OCI-LY7 (cell line): ENCODE measurements at regions of chr12 and their contacts with region 1.

Region 1: GRCh38 chr12:92570056-92570753 is 132.6 kb upstream of the PLEKHG7 start:
- DNase-seq: peak; percentile 85
- H3K4me3 ChIP-seq: peak overlapping the region; percentile 22
- H3K27ac ChIP-seq: peak overlapping the region; percentile 26
- H3K4me1 ChIP-seq: peaks cover 40% of the 10 kb centered on the region
- CTCF ChIP-seq: peak; percentile 100

Region 2: GRCh38 chr12:91382081-91382543 is 1188.1 kb before region 1 on chr12:
- CTCF ChIA-PET with region 1: interaction called, 3 read pairs
- POLR2A ChIA-PET with region 1: interaction called, 3 read pairs
- intact Hi-C with region 1: loop called (anchors 1 kb)
- DNase-seq: peak; percentile 77
- H3K4me3 ChIP-seq: no peak overlapping the region
- H3K27ac ChIP-seq: no peak overlapping the region
- H3K4me1 ChIP-seq: no peaks in the 10 kb centered on the region
- CTCF ChIP-seq: peak; percentile 94

Region 3: DNA sequence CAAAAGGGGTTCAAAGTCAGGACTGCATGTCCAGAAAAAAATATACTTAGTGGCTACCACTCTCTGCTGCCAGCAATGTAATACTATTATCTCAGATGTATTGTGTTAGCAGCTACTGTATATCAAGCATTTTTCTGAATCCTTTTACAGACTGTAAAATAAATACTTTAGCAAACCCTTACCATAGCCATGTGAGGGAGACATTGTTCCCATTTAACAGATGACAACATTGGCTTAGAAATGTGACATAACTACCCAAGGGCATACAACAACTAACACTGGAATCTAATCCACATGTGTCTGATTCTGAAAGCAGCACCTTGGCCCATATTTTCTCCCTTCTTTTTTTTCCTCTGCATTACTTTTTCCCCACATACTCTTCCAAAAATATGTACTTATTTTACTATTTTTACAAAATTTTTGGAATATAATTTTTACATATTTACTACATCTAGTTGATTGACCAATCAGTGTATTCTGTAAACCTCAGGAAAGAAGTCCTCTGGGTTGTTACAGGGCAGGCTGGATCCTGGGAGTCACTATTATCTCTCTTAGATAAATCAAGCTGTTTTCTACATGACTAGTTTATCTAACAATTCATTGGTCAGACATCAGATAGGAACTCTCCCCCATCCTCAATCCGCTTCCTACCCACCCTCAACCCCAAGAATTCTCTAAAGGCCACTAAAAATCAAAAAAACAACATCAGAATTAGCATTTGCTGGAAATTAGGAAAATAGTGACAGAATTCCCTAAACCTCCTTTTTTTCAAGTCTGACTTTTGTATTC is 578.6 kb before region 1 on chr12:
- CTCF ChIA-PET with region 1: interaction called, 3 read pairs
- POLR2A ChIA-PET with region 1: no interaction called
- intact Hi-C with region 1: loop called (anchors 2 kb)
- DNase-seq: peak; percentile 52
- H3K4me3 ChIP-seq: no peak overlapping the region
- H3K27ac ChIP-seq: no peak overlapping the region
- H3K4me1 ChIP-seq: no peaks in the 10 kb centered on the region
- CTCF ChIP-seq: peak; percentile 62

Region 4: DNA sequence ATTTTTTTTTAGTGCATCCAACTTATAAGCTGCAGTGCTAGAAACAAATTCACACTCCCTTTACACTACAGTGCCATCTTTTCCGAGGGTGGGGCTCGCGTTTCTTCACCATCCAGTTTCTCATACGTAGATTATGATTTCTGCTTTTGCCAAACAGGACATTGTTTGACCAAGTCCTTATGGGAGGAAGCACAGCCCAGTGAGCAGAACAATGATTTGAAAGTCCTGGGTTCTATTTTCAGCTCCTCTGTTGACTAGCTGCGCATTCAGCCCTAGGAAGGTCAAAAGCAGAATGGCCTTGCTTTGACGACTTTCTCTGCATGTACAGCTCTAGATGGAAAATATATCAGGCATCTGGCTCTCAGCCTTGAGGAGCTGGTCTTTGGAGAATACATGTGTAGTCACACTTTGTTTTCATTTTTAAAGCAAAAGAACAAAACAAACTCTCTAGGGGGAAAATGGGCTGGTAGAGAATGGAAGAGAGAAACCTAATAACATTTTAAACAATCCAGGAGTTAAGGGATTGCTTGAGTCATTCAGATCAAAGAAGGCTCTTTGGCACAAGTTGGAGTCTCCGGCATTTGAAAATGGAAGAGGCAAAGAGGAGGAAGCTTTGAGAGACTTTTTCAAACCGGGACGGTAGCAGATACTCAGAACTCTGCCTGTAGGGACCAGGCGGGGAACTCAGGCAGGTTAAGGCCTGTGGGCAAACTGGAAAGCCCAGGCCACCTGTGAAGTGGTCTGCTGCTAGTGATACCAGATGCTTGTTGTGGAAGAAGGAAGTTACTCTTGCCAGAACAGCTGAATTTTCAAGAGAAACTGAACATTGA is 124.7 kb before region 1 on chr12:
- CTCF ChIA-PET with region 1: no interaction called
- POLR2A ChIA-PET with region 1: interaction called, 7 read pairs
- intact Hi-C with region 1: loop called (anchors 1 kb)
- DNase-seq: peak; percentile 98
- H3K4me3 ChIP-seq: peak overlapping the region; percentile 58
- H3K27ac ChIP-seq: peak overlapping the region; percentile 99
- H3K4me1 ChIP-seq: peaks cover 65% of the 10 kb centered on the region
- CTCF ChIP-seq: no peak

Region 5: GRCh38 chr12:92649511-92650227 is 79.5 kb after region 1 on chr12:
- CTCF ChIA-PET with region 1: no interaction called
- POLR2A ChIA-PET with region 1: no interaction called
- intact Hi-C with region 1: loop called (anchors 2 kb)
- DNase-seq: peak; percentile 70
- H3K4me3 ChIP-seq: no peak overlapping the region
- H3K27ac ChIP-seq: no peak overlapping the region
- H3K4me1 ChIP-seq: no peaks in the 10 kb centered on the region
- CTCF ChIP-seq: peak; percentile 89

Region 6: GRCh38 chr12:92735131-92735721 is 165.0 kb after region 1 on chr12:
- CTCF ChIA-PET with region 1: no interaction called
- POLR2A ChIA-PET with region 1: no interaction called
- intact Hi-C with region 1: no loop called
- DNase-seq: no peak
- H3K4me3 ChIP-seq: no peak overlapping the region
- H3K27ac ChIP-seq: no peak overlapping the region
- H3K4me1 ChIP-seq: no peaks in the 10 kb centered on the region
- CTCF ChIP-seq: 0 out of 2 replicates have a peak, but pooled peaks have one; percentile 22